Psoas muscle (tissue), 8 donors: ENCODE measurements at regions of chr1 and their contacts with region 1.

Region 1: GRCh38 chr1:38026592-38027200 is 14.2 kb downstream of the UTP11 start:
- DNase-seq: peak in 1 of 2 donors; percentile 75
- ATAC-seq: peak in 1 of 4 donors; percentile 9
- H3K4me3 ChIP-seq: no peak overlapping the region
- H3K27ac ChIP-seq: peak overlapping the region; percentile 70
- H3K4me1 ChIP-seq: peaks cover 89% of the 10 kb centered on the region
- H3K27me3 ChIP-seq: no peaks in the 10 kb centered on the region
- CTCF ChIP-seq: peak; percentile 50

Region 2: DNA sequence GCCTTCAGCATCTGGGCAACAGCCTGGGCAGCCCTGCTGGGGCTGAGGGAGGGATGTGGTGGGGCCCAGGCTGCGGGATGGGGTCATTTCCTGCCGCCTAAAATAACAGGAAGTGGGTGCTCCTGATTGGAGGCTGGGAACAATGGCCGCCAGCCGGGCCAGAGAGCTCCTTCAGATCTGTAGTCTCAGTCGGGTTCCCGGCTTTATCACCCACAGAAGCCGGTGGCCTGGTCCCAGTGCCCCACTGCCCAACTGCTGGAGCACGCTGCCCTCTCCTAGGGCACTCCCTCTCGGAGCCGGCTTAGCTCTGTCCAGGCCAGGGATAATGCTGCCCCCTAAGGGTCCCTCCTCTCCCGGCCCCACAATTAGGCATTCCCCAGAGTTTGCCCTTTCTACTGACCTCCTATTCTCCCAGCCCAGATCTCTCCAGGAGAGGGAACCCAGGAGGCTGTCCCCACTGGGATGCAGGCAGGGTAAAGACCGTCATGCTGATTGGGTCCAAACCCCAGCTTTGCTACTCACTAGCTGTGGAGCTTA is 1865.7 kb before region 1 on chr1:
- intact Hi-C with region 1: loop called in 1 of 2 experiments (anchors 10 kb)
- DNase-seq: peak; percentile 71 to 83
- ATAC-seq: peak; percentile 25 to 39 (median 34)
- H3K4me3 ChIP-seq: peak overlapping the region; percentile 61
- H3K27ac ChIP-seq: peak overlapping the region; percentile 94
- H3K4me1 ChIP-seq: peaks cover 73% of the 10 kb centered on the region
- H3K27me3 ChIP-seq: no peaks in the 10 kb centered on the region
- CTCF ChIP-seq: peak; percentile 28

Region 3: GRCh38 chr1:38097284-38097898 is 70.7 kb after region 1 on chr1:
- intact Hi-C with region 1: no loop called
- DNase-seq: no peak
- ATAC-seq: no peak
- H3K4me3 ChIP-seq: no peak overlapping the region
- H3K27ac ChIP-seq: no peak overlapping the region
- H3K4me1 ChIP-seq: no peaks in the 10 kb centered on the region
- H3K27me3 ChIP-seq: no peaks in the 10 kb centered on the region
- CTCF ChIP-seq: no peak

Region 4: GRCh38 chr1:38586993-38587646 is 560.4 kb after region 1 on chr1:
- intact Hi-C with region 1: loop called in 1 of 2 experiments (anchors 5 kb)
- DNase-seq: peak; percentile 34 to 57
- ATAC-seq: peak; percentile 59 to 70 (median 64)
- H3K4me3 ChIP-seq: no peak overlapping the region
- H3K27ac ChIP-seq: no peak overlapping the region
- H3K4me1 ChIP-seq: no peaks in the 10 kb centered on the region
- H3K27me3 ChIP-seq: peaks cover 0 to 3% (median 0%) of the 10 kb centered on the region in 3 donors
- CTCF ChIP-seq: peak; percentile 73

Region 5: GRCh38 chr1:38834937-38835827 is 808.5 kb after region 1 on chr1:
- intact Hi-C with region 1: loop called in 1 of 2 experiments (anchors 5 kb)
- DNase-seq: no peak
- ATAC-seq: peak; percentile 80 to 95 (median 88)
- H3K4me3 ChIP-seq: no peak overlapping the region
- H3K27ac ChIP-seq: no peak overlapping the region
- H3K4me1 ChIP-seq: peaks cover 6% of the 10 kb centered on the region
- H3K27me3 ChIP-seq: no peaks in the 10 kb centered on the region
- CTCF ChIP-seq: peak; percentile 82